ENCODE measurements at regions of chr6 and their contacts with region 1.

Region 1: DNA sequence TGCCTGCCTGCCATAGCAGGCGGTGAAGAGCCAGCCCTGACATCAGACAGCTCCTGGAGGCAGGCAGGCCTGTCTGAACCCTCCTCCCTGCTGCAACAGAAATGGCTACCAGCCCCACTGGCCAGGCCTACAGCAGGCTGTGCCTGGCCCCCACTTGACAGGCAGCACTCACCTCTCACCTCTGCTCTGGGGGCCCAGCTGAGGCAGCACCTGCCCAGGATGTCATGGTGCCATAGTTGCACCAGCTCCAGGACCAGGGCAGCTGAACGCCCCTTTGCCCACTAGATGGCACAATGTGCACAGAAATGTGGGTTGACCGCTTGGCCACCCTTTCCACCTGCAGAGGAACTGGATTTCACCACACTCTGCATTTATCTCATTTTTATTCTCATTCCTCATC is 30.6 kb downstream of the MRPL14 start:
- DNase-seq: peak; percentile 91
- H3K4me3 ChIP-seq: no peak overlapping the region
- H3K27ac ChIP-seq: no peak overlapping the region
- H3K4me1 ChIP-seq: peaks cover 0 to 8% (median 0%) of the 10 kb centered on the region in 6 donors
- H3K27me3 ChIP-seq: no peaks in the 10 kb centered on the region
- CTCF ChIP-seq: peak; percentile 78 to 95 (median 90)
- POLR2A ChIP-seq: no peak

Region 2: GRCh38 chr6:44151348-44152108 is 54.9 kb after region 1 on chr6:
- intact Hi-C with region 1: loop called (anchors 2 kb)
- DNase-seq: peak; percentile 93
- H3K4me3 ChIP-seq: peak overlapping the region in 1 of 8 donors; percentile 38
- H3K27ac ChIP-seq: no peak overlapping the region
- H3K4me1 ChIP-seq: peaks cover 0 to 10% (median 3%) of the 10 kb centered on the region in 6 donors
- H3K27me3 ChIP-seq: no peaks in the 10 kb centered on the region
- CTCF ChIP-seq: peak; percentile 94 to 99 (median 98)
- POLR2A ChIP-seq: no peak

Region 3: DNA sequence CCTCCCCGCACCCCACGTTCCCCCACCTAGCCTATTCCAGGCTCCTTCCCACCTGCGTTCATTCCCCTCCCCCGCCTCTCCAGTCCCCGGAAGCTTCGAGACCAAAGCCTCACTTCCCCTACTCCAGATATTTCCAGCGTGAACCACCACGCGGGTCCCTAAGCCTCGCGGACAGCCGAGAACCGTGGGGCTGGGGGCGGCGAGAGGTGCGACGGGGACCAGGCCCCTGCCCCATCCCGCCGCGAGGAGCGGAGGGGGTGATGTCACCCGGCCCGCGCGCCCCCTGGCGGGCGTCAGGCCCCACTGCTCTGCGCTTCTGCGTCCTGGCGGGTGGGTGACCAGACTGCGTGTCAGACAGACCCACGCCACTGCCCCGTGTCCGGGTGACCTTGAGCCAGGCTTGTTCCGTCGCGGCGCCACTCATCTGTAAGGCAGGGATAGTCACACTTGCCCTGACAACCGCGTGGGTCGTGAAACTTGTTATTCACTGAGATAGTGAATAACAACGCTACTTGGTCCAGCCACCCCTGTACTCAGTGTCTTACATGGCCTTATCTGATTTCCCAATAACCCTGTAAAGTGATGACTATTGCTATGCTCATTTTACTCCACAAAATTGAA is 141.3 kb after region 1 on chr6:
- intact Hi-C with region 1: loop called (anchors 10 kb)
- DNase-seq: peak; percentile 96
- H3K4me3 ChIP-seq: peak overlapping the region; percentile 34 to 79 (median 50)
- H3K27ac ChIP-seq: peak overlapping the region; percentile 84 to 97 (median 94)
- H3K4me1 ChIP-seq: peaks cover 9 to 59% (median 26%) of the 10 kb centered on the region in 6 donors
- H3K27me3 ChIP-seq: no peaks in the 10 kb centered on the region
- CTCF ChIP-seq: peak; percentile 94 to 99 (median 98)
- POLR2A ChIP-seq: peak in 2 of 3 donors; percentile 5 to 9

Region 4: GRCh38 chr6:44338228-44339122 is 241.9 kb after region 1 on chr6:
- intact Hi-C with region 1: loop called (anchors 2 kb)
- DNase-seq: peak; percentile 74
- H3K4me3 ChIP-seq: no peak overlapping the region
- H3K27ac ChIP-seq: no peak overlapping the region
- H3K4me1 ChIP-seq: peaks cover 0 to 17% (median 7%) of the 10 kb centered on the region in 6 donors
- H3K27me3 ChIP-seq: peaks cover 0 to 28% (median 21%) of the 10 kb centered on the region in 7 donors
- CTCF ChIP-seq: peak; percentile 58 to 85 (median 75)
- POLR2A ChIP-seq: no peak

Region 5: DNA sequence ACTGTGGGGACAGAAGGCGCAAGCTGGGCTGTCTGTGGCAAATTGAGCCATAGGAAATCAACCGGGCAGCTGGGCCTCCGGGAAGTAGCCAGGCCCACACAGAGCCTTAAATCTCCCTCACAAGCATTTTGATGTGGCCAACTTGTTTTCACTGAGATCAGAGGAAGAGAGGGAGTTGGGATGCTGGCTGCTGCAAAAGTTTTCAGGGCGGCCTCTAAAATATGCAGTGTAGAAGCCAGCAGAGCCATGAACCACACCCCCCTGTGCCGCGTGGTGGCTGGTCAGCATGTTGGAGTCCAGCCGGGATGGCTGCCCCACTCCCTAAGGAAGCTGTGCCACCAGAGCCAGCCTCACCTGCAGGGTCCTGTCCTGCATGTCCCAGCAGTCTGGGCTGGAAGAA is 458.2 kb after region 1 on chr6:
- intact Hi-C with region 1: no loop called
- DNase-seq: no peak
- H3K4me3 ChIP-seq: no peak overlapping the region
- H3K27ac ChIP-seq: no peak overlapping the region
- H3K4me1 ChIP-seq: no peaks in the 10 kb centered on the region
- H3K27me3 ChIP-seq: peaks cover 0 to 43% (median 0%) of the 10 kb centered on the region in 7 donors
- CTCF ChIP-seq: no peak
- POLR2A ChIP-seq: no peak